CD8-positive, alpha-beta memory T cell (primary cell): ENCODE measurements at regions of chr2 and their contacts with region 1.

Region 1: DNA sequence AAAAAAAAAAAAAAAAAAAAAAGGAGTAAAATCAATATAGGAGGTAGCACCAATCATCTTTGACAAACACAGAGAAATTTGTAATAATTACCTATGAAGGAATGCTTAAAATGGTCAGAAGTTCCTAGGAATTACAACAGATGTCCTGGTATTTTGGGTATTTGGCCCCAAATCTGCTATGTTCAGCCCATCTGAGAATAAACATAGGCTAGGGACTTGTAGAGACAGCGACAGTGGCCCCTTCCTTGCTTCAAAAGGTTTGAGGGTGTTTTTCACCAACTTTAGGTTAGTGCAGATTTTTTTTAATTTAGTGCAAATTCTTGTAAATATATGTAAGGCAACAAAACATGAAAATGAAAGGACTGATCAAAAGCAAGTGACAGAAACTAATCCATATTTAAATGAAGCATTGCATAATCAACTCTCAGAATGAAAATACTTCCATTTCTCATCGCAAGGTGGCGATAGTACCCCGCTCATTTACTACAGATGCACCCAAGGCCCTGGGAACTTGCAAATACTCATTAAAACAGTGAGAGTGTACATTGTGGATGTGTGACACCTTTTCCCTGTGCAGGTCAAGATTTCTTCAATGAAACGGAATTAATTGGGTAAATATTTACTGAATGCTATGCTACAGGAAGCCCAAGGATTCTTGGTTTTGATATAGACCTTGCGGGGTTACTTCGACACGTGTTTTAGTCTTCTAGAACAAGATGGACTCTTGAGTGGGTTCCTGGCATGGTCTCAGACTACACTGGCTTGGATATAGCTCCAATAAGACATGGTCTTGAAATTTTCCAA is 44.6 kb downstream of the FAM124B start:
- DNase-seq: peak; percentile 24 to 61 (median 40)
- H3K4me3 ChIP-seq: no peak overlapping the region
- H3K4me3 Mint-ChIP-seq: no peak overlapping the region
- H3K27ac ChIP-seq: no peak overlapping the region
- H3K27ac Mint-ChIP-seq: no peak overlapping the region
- H3K4me1 ChIP-seq: no peaks in the 10 kb centered on the region
- H3K4me1 Mint-ChIP-seq: no peaks in the 10 kb centered on the region
- H3K27me3 ChIP-seq: no peaks in the 10 kb centered on the region
- H3K27me3 Mint-ChIP-seq: peaks cover 1 to 26% of the 10 kb centered on the region in 2 donors

Region 2: DNA sequence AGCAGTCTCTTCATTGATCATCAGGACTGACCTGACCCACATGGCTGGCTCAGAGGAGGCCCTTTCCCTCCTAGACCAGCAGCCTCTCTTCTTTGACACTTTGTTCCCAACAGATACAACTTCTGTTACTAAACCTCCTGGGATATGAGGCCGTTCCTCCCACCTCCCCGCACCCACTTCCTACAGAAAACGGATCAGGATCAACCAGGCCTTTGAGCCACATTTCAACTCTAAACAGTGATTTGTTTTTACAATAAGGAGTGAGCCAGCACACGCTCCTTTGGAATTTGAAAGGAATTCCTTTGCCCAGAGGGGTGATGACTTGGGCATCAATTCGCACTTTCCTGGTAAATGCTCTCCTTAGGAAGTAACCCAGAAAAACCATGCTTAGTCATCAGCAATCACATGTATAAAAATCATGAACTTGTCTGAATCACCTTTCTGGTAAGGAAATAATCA is 135.8 kb before region 1 on chr2:
- CTCF ChIA-PET with region 1: no interaction called
- POLR2A ChIA-PET with region 1: no interaction called
- DNase-seq: no peak
- H3K4me3 ChIP-seq: no peak overlapping the region
- H3K4me3 Mint-ChIP-seq: no peak overlapping the region
- H3K27ac ChIP-seq: no peak overlapping the region
- H3K27ac Mint-ChIP-seq: no peak overlapping the region
- H3K4me1 ChIP-seq: no peaks in the 10 kb centered on the region
- H3K4me1 Mint-ChIP-seq: no peaks in the 10 kb centered on the region
- H3K27me3 ChIP-seq: no peaks in the 10 kb centered on the region
- H3K27me3 Mint-ChIP-seq: peaks cover 12 to 23% of the 10 kb centered on the region in 2 donors

Region 3: GRCh38 chr2:224333726-224334482 is 23.4 kb before region 1 on chr2:
- CTCF ChIA-PET with region 1: no interaction called
- POLR2A ChIA-PET with region 1: no interaction called
- DNase-seq: no peak
- H3K4me3 ChIP-seq: no peak overlapping the region
- H3K4me3 Mint-ChIP-seq: no peak overlapping the region
- H3K27ac ChIP-seq: no peak overlapping the region
- H3K27ac Mint-ChIP-seq: no peak overlapping the region
- H3K4me1 ChIP-seq: no peaks in the 10 kb centered on the region
- H3K4me1 Mint-ChIP-seq: no peaks in the 10 kb centered on the region
- H3K27me3 ChIP-seq: no peaks in the 10 kb centered on the region
- H3K27me3 Mint-ChIP-seq: peaks cover 0 to 46% of the 10 kb centered on the region in 2 donors

Region 4: DNA sequence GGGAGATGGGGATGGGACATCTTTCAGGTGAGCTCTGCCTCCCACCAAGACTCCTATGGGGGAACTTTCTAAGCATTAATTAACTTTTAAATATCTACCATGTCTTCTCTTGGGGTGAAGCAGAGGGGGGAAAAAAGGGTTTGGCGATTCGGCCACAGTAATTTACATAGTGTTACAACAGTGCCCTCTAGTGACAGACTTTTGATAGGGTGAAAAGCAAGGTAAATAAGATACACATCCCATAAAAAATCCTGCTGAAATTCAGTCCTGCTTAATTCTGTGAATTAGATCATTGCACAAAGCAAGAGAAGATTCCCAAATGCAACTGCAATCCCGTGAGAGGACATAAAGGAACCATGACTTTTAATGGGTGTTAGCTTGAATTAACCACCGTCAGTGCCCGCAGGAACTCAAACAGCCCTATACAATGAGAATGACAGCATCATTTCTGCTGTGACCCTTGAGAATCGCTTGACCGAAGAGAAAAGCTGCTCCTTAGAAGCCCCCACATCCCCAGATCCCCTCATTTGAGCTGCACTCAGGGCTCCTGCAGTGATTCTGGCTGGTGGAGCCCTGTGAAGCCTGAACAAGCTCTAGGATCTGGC is 11.8 kb after region 1 on chr2:
- CTCF ChIA-PET with region 1: interaction called, 11 read pairs
- POLR2A ChIA-PET with region 1: no interaction called
- DNase-seq: peak in 2 of 5 donors; percentile 12 to 19
- H3K4me3 ChIP-seq: no peak overlapping the region
- H3K4me3 Mint-ChIP-seq: no peak overlapping the region
- H3K27ac ChIP-seq: no peak overlapping the region
- H3K27ac Mint-ChIP-seq: no peak overlapping the region
- H3K4me1 ChIP-seq: no peaks in the 10 kb centered on the region
- H3K4me1 Mint-ChIP-seq: peaks cover 0 to 1% (median 0%) of the 10 kb centered on the region in 3 donors
- H3K27me3 ChIP-seq: no peaks in the 10 kb centered on the region
- H3K27me3 Mint-ChIP-seq: peaks cover 6 to 16% of the 10 kb centered on the region in 2 donors

Region 5: DNA sequence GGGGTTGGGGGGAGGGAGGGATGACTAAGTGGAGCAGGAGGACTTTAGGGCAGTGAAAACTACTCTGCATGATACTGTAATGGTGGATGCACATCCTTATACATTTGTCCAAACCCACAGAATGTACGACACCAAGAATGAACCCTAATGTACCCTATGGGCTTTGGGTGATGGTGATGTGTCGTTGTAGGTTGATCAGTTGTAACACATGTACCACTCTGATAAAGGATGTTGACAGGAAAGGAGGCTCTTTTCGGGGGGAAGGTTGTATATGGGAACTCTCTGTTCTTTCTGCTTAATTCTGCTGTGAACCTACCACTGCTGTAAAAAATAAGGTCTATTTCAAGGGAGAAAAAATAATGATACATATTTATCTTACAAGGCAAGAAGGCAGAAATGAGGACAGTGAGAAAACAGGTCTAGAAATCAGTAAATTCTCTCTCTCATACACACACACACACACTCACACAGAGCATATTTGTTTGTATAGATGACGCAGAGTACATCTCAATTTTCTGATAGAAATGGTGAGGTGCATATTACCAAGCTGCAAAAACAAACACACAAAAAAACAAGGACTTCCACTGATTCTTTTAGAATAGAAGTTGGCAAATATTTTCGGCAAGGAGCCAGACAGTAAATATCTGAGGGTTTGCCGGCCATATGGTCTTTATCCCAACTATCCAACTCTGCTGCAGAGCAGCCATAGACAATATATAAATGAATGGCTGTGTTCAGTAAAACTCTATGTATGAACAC is 24.4 kb after region 1 on chr2:
- CTCF ChIA-PET with region 1: no interaction called
- POLR2A ChIA-PET with region 1: no interaction called
- DNase-seq: no peak
- H3K4me3 ChIP-seq: no peak overlapping the region
- H3K4me3 Mint-ChIP-seq: no peak overlapping the region
- H3K27ac ChIP-seq: no peak overlapping the region
- H3K27ac Mint-ChIP-seq: no peak overlapping the region
- H3K4me1 ChIP-seq: no peaks in the 10 kb centered on the region
- H3K4me1 Mint-ChIP-seq: peaks cover 0 to 6% (median 0%) of the 10 kb centered on the region in 3 donors
- H3K27me3 ChIP-seq: no peaks in the 10 kb centered on the region
- H3K27me3 Mint-ChIP-seq: peaks cover 5 to 8% of the 10 kb centered on the region in 2 donors

Region 6: GRCh38 chr2:224650815-224651439 is 293.6 kb after region 1 on chr2:
- CTCF ChIA-PET with region 1: interaction called, 34 read pairs
- POLR2A ChIA-PET with region 1: no interaction called
- DNase-seq: peak in 2 of 5 donors; percentile 29 to 32
- H3K4me3 ChIP-seq: no peak overlapping the region
- H3K4me3 Mint-ChIP-seq: no peak overlapping the region
- H3K27ac ChIP-seq: no peak overlapping the region
- H3K27ac Mint-ChIP-seq: no peak overlapping the region
- H3K4me1 ChIP-seq: no peaks in the 10 kb centered on the region
- H3K4me1 Mint-ChIP-seq: peaks cover 4 to 7% (median 5%) of the 10 kb centered on the region in 3 donors
- H3K27me3 ChIP-seq: no peaks in the 10 kb centered on the region
- H3K27me3 Mint-ChIP-seq: peaks cover 0 to 9% of the 10 kb centered on the region in 2 donors